Heart right ventricle (tissue), 16 donors: ENCODE measurements at regions of chr15 and their contacts with region 1.

Region 1: DNA sequence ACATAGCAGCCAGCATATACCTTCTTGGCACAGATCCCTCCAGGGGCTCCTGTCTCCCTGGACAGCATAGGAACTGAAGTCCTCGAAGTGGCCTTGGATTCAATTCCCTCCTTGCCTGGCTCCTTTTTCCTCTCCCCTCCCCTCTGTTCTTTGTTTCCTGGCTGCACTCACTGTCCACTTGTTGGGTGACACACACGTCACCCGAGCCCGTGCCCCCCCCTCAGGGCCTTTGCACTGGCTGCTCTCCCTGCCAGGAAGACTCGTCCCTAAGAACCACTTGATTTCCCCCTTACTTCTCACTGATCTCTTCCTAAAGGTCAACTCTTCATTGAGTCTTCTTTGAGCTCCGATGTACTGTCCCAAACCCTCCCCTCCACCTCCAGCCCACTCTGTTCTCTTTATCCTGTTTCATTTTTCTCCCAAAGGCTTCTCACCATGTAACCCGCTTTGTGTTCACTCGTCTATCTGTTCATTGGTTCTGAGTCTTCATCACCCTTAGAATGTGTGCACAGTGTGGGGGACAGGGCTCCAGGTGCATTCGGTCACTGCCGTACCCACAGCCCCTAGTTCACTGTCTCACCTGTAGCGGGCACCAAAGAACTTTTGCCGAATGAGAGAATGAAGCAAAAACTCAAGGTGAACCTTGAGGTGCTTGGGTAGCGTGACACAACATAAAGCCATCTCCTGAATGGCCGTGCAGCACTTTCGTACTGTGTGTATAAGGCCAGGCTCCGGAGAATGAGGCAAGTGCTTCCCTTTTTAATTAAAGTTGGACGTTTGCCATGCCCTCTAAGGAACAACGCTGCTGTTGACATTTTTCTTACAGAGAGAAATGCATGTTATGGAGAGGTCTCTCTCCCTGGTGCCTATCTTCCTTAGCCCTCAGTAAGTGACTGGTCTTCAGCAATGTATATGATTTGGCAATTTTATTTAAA is 74.0 kb downstream of the CHRNA7 start:
- DNase-seq: peak in 1 of 2 donors; percentile 18
- ATAC-seq: peak in 3 of 8 donors; percentile 30 to 56 (median 47)
- H3K4me3 ChIP-seq: no peak overlapping the region
- H3K27ac ChIP-seq: no peak overlapping the region
- H3K4me1 ChIP-seq: peaks cover 0 to 15% (median 11%) of the 10 kb centered on the region in 9 donors
- H3K27me3 ChIP-seq: peaks cover 0 to 4% (median 0%) of the 10 kb centered on the region in 7 donors
- CTCF ChIP-seq: no peak

Region 2: DNA sequence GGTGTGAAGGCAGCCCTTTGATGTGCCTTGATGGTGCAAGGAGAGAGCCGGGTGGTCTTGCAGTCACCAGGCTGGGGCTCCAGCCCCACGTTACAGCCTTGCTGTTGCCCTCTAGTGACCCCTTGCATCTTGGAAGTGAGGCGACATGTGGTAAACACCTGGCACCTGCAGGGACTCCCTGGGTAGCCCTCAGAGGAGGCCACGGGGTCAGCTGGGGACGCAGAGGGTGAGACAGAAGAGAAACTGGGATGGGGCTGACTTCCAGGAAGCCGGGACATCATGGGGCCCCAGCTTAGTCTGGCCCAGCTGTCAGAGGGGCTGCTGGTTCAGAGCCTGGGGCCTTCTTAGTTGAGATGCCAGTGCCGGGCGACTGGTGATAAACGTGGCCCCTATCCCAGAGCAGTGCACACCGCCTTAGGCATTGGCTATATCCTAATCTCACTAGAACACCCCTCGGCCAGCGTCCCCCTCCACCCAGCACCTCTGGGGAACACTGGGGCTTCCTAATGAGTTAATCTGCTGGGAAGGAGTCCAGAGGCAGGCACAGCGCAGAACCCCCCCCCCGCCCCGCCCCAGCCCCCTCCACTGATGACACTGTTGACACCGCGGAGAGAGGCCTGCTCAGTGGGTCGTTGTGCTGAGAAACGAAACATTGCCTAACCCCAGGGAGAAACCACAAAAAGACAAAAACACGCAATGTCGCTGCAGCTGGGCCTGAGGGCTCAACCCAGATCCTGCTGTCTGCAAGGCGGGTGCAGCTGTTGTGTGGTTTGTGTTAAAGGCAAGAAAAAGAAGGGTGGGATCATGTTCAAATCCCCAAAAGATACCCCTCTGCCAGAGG is 838.2 kb before region 1 on chr15:
- intact Hi-C with region 1: loop called in 1 of 10 experiments (anchors 5 kb)
- DNase-seq: peak; percentile 34 to 42
- ATAC-seq: peak; percentile 22 to 67 (median 48)
- H3K4me3 ChIP-seq: no peak overlapping the region
- H3K27ac ChIP-seq: peak overlapping the region in 5 of 10 donors; percentile 31 to 91 (median 48)
- H3K4me1 ChIP-seq: peaks cover 0 to 90% (median 19%) of the 10 kb centered on the region in 9 donors
- H3K27me3 ChIP-seq: no peaks in the 10 kb centered on the region
- CTCF ChIP-seq: no peak

Region 3: GRCh38 chr15:32148833-32149555 is 44.7 kb after region 1 on chr15:
- intact Hi-C with region 1: loop called in 1 of 10 experiments (anchors 5 kb)
- DNase-seq: no peak
- ATAC-seq: no peak
- H3K4me3 ChIP-seq: no peak overlapping the region
- H3K27ac ChIP-seq: no peak overlapping the region
- H3K4me1 ChIP-seq: no peaks in the 10 kb centered on the region
- H3K27me3 ChIP-seq: peaks cover 0 to 11% (median 0%) of the 10 kb centered on the region in 7 donors
- CTCF ChIP-seq: no peak